Sigmoid colon (tissue), 7 donors: ENCODE measurements at regions of chr3 and their contacts with region 1.

Region 1: GRCh38 chr3:123700791-123701722 is 116.2 kb upstream of the HACD2 start:
- DNase-seq: peak; percentile 95
- H3K4me3 ChIP-seq: peak overlapping the region; percentile 68 to 81 (median 73)
- H3K27ac ChIP-seq: peak overlapping the region; percentile 89 to 98 (median 94)
- H3K4me1 ChIP-seq: peaks cover 2 to 45% (median 37%) of the 10 kb centered on the region in 4 donors
- H3K27me3 ChIP-seq: no peaks in the 10 kb centered on the region
- CTCF ChIP-seq: peak in 1 of 4 experiments; percentile 8
- EP300 ChIP-seq: peak in 2 of 4 donors; percentile 14 to 28
- POLR2A ChIP-seq: peak; percentile 91 to 95

Region 2: DNA sequence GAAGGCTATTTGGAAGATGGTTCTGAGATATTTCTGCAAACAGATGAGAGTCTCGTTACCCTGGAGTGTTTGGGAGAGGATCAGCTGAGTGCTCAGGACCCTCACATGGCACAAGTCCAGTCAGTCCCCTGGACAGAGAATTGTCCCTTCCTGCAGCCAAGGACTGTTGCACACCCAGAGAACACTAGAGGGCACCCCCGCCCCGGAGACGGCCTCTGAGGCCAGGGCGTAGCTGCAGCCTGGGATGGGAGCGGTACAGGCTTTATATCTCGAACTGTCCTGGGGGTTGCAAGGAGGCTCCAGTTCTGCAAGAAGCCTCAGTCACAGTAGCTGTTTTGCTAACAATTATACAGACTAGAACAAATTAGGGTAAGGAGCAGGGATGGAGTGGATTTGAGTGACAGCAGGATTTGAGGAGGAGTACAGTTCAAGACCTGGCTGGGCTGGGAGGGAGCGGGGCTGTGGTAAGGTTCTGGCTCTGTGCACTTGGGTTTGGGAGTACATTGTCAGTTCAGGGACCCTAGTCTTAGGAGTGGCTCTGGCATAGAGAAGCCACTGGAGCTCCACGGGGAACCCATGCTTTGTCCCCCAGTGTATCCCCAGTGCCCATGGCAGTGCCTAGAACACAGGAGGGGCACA is 48.6 kb before region 1 on chr3:
- intact Hi-C with region 1: loop called (anchors 2 kb)
- DNase-seq: peak; percentile 91
- H3K4me3 ChIP-seq: no peak overlapping the region
- H3K27ac ChIP-seq: peak overlapping the region; percentile 89 to 98 (median 94)
- H3K4me1 ChIP-seq: peaks cover 0 to 99% (median 92%) of the 10 kb centered on the region in 4 donors
- H3K27me3 ChIP-seq: no peaks in the 10 kb centered on the region
- CTCF ChIP-seq: peak in 2 of 4 experiments; percentile 79 to 86
- EP300 ChIP-seq: no peak
- POLR2A ChIP-seq: no peak

Region 3: DNA sequence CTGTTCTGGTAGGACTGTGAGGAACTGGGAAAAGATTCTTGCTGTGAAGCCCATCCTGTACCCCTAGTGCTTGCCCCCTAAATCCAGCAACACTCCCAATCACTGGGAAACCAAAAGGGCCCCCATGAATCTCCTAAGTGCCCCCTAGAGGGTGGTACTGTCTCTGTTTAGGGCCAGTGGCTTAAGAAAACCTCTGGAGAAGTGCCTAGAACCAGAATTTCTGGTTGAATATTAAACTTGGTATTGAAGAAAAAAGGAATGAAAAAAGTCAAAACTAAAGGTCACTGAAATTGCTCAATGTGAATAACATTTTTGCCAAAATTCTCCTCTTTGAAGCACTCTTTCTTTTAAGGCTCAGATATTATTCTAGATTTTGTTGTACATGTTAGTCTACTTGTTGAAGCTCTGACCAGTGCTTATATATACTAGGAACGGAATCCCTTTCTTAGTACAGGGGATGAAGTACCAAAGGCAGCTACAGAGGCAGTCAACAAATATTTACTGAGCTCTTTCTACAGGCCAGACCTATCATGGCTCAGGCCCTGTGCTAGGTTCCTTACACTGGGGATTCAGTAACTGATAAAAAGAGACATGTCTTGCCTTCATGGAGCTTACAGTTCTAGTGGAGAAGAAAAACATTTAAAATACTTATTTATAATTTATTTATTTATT is 44.3 kb after region 1 on chr3:
- intact Hi-C with region 1: no loop called
- DNase-seq: no peak
- H3K4me3 ChIP-seq: no peak overlapping the region
- H3K27ac ChIP-seq: no peak overlapping the region
- H3K4me1 ChIP-seq: peaks cover 0 to 40% (median 24%) of the 10 kb centered on the region in 4 donors
- H3K27me3 ChIP-seq: no peaks in the 10 kb centered on the region
- CTCF ChIP-seq: no peak
- EP300 ChIP-seq: no peak
- POLR2A ChIP-seq: no peak